ENCODE measurements at regions of chr10 and their contacts with region 1.

Region 1: GRCh38 chr10:93006435-93007039 is 54.1 kb upstream of the CYP26C1 start:
- DNase-seq: peak; percentile 36 to 57 (median 57)
- H3K4me3 ChIP-seq: no peak overlapping the region
- H3K27ac ChIP-seq: no peak overlapping the region
- H3K4me1 ChIP-seq: no peaks in the 10 kb centered on the region
- H3K27me3 ChIP-seq: no peaks in the 10 kb centered on the region

Region 2: DNA sequence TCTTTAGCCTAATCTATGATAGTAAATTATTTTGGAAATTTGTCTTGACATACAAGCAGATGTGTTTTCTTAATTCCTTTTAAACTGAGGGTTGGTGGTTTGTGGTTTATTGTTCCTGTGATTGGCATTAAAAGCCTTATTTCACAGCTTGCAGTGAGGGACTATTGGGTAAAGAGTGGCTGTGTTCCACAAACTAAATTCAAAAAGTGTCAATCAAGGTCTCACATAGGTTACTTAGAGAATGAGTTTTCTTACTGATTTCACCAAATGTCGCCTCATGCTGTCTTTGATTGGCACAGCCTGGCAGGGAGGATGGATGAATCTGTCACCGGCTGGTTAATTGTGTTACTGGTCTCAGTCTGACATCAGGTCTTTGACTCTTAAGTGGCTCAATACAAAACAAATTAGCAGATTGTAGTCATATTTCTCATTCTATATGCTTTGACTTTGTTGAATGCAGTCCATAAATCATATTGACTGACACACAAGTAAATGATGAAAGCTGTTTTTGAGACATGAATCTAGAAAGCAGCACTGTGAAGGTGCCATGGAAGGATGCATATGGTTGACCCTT is 12.8 kb before region 1 on chr10:
- CTCF ChIA-PET with region 1: interaction called, 30 read pairs
- POLR2A ChIA-PET with region 1: no interaction called
- DNase-seq: peak; percentile 18 to 89 (median 82)
- H3K4me3 ChIP-seq: peak overlapping the region in 2 of 7 experiments; percentile 11 to 43
- H3K27ac ChIP-seq: no peak overlapping the region
- H3K4me1 ChIP-seq: peaks cover 24 to 44% (median 33%) of the 10 kb centered on the region in 4 experiments
- H3K27me3 ChIP-seq: no peaks in the 10 kb centered on the region

Region 3: DNA sequence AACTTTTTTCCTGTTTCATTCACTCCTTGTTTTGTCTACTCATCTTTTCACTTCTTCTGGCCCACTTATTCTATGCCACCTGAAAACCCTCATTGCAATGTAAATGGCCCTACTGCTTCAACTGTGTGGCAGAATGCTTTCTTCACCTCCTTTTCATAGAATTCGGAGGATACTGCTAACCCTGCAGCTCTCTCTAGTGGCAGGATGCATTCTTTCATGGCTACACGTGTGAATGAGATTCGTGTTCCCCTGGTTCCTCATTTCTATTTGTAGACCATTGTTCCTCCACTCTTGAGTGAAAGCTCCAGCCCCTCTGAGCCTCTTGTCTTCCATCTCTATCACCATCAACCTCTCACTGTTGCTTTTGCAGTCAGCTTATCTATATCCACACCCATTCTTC is 33.2 kb after region 1 on chr10:
- CTCF ChIA-PET with region 1: interaction called, 21 read pairs
- POLR2A ChIA-PET with region 1: no interaction called
- DNase-seq: peak; percentile 67 to 86 (median 85)
- H3K4me3 ChIP-seq: no peak overlapping the region
- H3K27ac ChIP-seq: no peak overlapping the region
- H3K4me1 ChIP-seq: peaks cover 0 to 15% (median 10%) of the 10 kb centered on the region in 4 experiments
- H3K27me3 ChIP-seq: no peaks in the 10 kb centered on the region